Dorsolateral prefrontal cortex (tissue), 120 donors: ENCODE measurements at regions of chr20 and their contacts with region 1.

Region 1: GRCh38 chr20:13784893-13785715 is at the starts of genes ESF1 and NDUFAF5:
- DNase-seq: peak; percentile 91 to 99 (median 96)
- H3K4me3 ChIP-seq: peak within 1 kb of the TSS; percentile 59 to 100 (median 93)
- H3K27ac ChIP-seq: peak within 1 kb of the TSS; percentile 20 to 95 (median 85)
- H3K27me3 ChIP-seq: no peaks in the 10 kb centered on the region
- CTCF ChIP-seq: peak in 37 of 56 donors; percentile 6 to 59 (median 33)
- total RNA-seq, gene ESF1: 13.5 to 23.8 (median 18.3) TPM
- total RNA-seq, gene NDUFAF5: 29.6 to 79.6 (median 49.3) TPM

Region 2: DNA sequence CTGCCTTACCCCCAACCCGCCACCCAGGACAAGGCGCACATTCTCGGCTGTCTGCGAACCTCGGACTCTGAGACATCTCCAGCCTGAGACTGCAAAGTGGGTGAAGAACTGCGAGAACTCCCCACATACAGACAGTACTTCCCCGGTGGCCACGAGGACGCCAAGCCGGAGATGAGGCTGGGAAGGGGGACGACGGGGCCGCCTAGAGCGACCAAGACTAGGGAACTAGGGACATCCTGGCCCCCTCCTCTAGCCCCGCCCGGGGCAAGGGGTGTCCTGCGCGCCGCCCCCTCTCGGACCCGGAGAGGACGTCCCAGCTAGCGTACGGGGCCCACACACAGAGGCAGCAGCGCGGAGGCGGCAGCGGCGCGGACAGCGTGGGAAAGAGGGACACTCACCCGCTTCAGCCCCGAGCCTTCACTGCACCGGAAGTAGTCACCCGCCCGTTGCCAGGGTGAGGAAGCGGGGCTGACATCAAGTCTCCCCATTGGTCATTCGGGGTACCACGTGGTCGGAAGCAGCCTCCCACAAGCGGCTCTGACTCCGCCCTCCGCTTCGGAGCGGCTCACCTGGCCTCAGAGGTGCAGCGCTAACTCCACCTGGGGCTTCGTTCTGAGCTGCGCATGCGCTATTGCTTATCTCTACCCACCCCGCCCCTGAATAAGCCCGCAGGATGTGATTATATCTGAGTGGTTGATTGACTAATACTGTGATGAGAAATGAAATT is 146.4 kb before region 1 on chr20 and contains the start of gene TASP1:
- intact Hi-C with region 1: loop called in 1 of 2 experiments (anchors 5 kb)
- DNase-seq: peak; percentile 94 to 98 (median 96)
- H3K4me3 ChIP-seq: peak within 1 kb of the TSS; percentile 62 to 99 (median 91)
- H3K27ac ChIP-seq: peak within 1 kb of the TSS in 30 of 59 donors; percentile 1 to 80 (median 56)
- H3K27me3 ChIP-seq: peaks cover 0 to 11% (median 0%) of the 10 kb centered on the region in 45 donors
- CTCF ChIP-seq: peak in 10 of 56 donors; percentile 6 to 29 (median 22)
- total RNA-seq, gene TASP1: 12.3 to 30.9 (median 21.4) TPM

Region 3: DNA sequence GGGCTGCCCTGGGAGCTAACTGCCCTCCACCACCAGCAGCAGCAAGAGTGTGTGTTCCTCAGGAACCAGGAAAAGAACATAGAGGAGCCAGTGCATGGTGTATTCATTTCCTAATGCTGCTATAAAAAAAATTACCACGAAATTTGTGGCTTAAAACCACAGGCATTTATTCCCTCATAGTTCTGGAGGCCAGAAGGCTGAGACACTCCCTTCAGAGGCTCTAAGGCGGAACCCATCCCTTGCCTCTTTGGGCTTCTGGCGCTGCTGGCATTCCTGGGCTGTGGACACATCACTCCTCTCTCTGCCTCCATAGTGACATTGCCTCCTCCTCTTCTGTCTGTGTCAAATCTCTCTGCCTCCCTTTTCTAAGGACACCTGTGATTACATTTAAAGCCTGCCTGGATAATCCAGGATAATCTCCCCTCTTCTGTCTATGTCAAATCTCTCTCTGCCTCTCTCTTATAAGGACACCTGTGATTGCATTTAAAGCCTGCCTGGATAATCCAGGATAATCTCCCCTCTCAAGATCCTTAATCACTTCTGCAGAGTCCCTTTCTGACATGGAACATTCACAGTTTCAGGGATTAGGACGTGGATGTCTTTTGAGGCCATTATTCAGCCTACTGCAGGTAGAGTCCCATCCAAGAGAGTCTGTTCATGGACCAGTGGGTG is 54.5 kb after region 1 on chr20:
- intact Hi-C with region 1: no loop called
- DNase-seq: no peak
- H3K4me3 ChIP-seq: no peak overlapping the region
- H3K27ac ChIP-seq: no peak overlapping the region
- H3K27me3 ChIP-seq: peaks cover 0 to 9% (median 0%) of the 10 kb centered on the region in 45 donors
- CTCF ChIP-seq: no peak